ENCODE measurements at regions of chr6 and their contacts with region 1.

Region 1: DNA sequence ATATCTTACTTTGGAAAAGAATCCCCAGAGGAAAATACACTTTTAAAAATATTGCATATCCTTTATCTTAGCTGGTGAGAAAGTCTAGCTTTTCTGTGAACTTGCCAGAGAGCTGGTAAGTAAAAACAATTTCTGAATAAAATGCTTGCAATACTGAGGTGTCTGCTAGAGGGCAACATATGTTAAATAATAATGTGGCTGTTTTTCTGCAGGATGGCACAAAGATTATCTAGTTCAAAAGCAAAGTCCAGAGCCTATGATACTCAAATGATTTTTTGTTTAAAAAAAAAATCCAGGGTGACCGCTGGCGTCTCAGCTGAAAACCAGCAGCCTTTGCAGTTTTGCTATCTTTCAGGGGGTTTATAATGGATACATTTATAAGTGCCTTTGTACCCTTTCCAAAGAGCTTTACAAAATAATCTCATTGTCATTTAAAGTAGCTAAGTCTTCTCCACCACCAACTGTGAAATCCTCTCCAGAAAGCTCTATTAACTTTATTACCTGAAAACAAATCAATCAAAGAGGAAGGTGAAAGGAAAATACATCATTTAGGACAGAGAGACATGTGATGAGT is 194.9 kb downstream of the PHACTR1 start:
- DNase-seq: peak; percentile 63
- H3K4me3 ChIP-seq: no peak overlapping the region
- H3K27ac ChIP-seq: no peak overlapping the region
- H3K4me1 ChIP-seq: no peaks in the 10 kb centered on the region
- H3K27me3 ChIP-seq: peaks cover 2 to 10% of the 10 kb centered on the region in 2 experiments
- CTCF ChIP-seq: peak; percentile 26 to 27
- POLR2A ChIP-seq: no peak

Region 2: GRCh38 chr6:12865671-12866181 is 45.7 kb before region 1 on chr6:
- CTCF ChIA-PET with region 1: no interaction called
- POLR2A ChIA-PET with region 1: no interaction called
- dilution Hi-C with region 1: no loop called
- intact Hi-C with region 1: no loop called
- DNase-seq: no peak
- H3K4me3 ChIP-seq: no peak overlapping the region
- H3K27ac ChIP-seq: no peak overlapping the region
- H3K4me1 ChIP-seq: no peaks in the 10 kb centered on the region
- H3K27me3 ChIP-seq: peaks cover 3 to 6% of the 10 kb centered on the region in 2 experiments
- CTCF ChIP-seq: no peak
- POLR2A ChIP-seq: no peak

Region 3: DNA sequence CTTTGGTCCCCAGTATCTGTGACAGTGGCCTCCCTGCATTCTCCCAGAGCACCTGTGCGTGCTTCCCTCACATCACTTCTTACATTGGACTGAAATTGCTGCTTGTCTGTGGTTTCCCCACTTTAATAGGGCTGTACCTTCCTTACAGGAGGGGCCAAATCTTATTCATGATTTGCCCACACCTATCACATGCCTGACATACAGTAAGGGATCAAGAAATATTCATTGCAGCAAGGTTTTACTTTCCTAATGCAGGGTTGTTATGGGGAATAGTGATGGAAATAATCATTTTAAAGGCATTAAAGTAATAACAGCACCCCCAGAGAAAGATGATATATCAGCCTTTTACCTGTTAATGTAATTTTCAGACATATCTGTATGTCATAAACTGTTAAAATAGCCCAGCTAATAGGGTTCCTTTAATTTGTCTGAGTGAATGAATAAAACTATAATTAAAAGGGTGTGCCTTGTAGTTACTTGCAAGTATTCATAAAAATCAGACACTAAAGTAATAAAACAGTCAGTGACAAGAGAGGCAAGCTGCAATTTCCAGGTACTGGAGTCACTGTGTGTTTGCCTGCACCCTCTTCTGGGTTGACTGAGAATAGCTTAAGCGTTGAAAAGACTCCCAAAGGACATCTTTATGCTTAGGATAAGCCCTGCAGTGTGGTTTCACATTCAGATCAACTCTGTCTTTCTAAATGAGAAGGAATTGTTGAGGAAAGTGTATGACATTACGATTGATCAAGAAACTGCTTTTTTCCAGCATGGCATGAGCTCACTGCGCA is 12.2 kb before region 1 on chr6:
- CTCF ChIA-PET with region 1: interaction called, 17 read pairs
- POLR2A ChIA-PET with region 1: no interaction called
- dilution Hi-C with region 1: no loop called
- intact Hi-C with region 1: no loop called
- DNase-seq: no peak
- H3K4me3 ChIP-seq: no peak overlapping the region
- H3K27ac ChIP-seq: no peak overlapping the region
- H3K4me1 ChIP-seq: no peaks in the 10 kb centered on the region
- H3K27me3 ChIP-seq: peaks cover 17 to 23% of the 10 kb centered on the region in 2 experiments
- CTCF ChIP-seq: no peak
- POLR2A ChIP-seq: no peak

Region 4: GRCh38 chr6:13049663-13050254 is 138.3 kb after region 1 on chr6:
- CTCF ChIA-PET with region 1: interaction called, 13 read pairs
- POLR2A ChIA-PET with region 1: no interaction called
- dilution Hi-C with region 1: no loop called
- intact Hi-C with region 1: no loop called
- DNase-seq: peak; percentile 11
- H3K4me3 ChIP-seq: no peak overlapping the region
- H3K27ac ChIP-seq: no peak overlapping the region
- H3K4me1 ChIP-seq: no peaks in the 10 kb centered on the region
- H3K27me3 ChIP-seq: no peaks in the 10 kb centered on the region
- CTCF ChIP-seq: no peak
- POLR2A ChIP-seq: no peak

Region 5: GRCh38 chr6:13194852-13195251 is 283.4 kb after region 1 on chr6:
- CTCF ChIA-PET with region 1: interaction called, 51 read pairs
- POLR2A ChIA-PET with region 1: no interaction called
- dilution Hi-C with region 1: no loop called
- intact Hi-C with region 1: loop called (anchors 1 kb)
- DNase-seq: peak; percentile 69
- H3K4me3 ChIP-seq: no peak overlapping the region
- H3K27ac ChIP-seq: no peak overlapping the region
- H3K4me1 ChIP-seq: no peaks in the 10 kb centered on the region
- H3K27me3 ChIP-seq: no peaks in the 10 kb centered on the region
- CTCF ChIP-seq: peak; percentile 51 to 72
- POLR2A ChIP-seq: no peak

Region 6: GRCh38 chr6:13302751-13303667 is 391.5 kb after region 1 on chr6:
- CTCF ChIA-PET with region 1: interaction called, 23 read pairs
- POLR2A ChIA-PET with region 1: no interaction called
- dilution Hi-C with region 1: no loop called
- intact Hi-C with region 1: loop called (anchors 10 kb)
- DNase-seq: peak; percentile 93
- H3K4me3 ChIP-seq: peak overlapping the region in 1 of 3 experiments; percentile 15
- H3K27ac ChIP-seq: peak overlapping the region; percentile 86
- H3K4me1 ChIP-seq: peaks cover 36% of the 10 kb centered on the region
- H3K27me3 ChIP-seq: no peaks in the 10 kb centered on the region
- CTCF ChIP-seq: no peak
- POLR2A ChIP-seq: no peak

Region 7: DNA sequence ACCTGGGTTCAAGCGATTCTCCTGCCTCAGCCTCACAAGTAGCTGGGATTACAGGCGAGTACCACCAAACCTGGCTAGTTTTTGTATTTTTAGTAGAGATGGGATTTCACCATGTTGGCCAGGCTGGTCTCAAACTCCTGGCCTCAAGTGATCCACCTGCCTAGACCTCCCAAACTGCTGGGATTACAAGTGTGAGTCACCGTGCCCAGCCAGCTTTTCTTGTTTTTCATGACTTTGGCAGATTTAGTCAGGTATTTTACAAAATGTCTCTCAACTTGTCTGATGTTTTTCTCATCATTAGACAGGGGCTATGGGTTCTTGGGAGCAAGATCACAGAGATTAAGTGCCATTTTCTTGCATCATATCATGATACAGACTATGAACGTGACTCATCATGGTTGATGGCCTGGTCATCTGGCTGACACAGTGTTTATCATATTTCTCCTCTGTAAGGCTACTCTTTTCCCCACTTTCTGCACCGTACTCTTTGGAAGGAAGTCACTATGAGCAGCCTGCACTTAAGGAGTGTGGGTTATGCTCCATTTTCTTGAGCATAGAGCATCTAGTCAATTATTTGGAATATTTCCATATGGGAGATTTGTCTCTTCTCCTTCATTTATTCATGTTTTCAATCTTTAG is 1081.1 kb after region 1 on chr6:
- CTCF ChIA-PET with region 1: no interaction called
- POLR2A ChIA-PET with region 1: no interaction called
- dilution Hi-C with region 1: no loop called
- intact Hi-C with region 1: no loop called
- DNase-seq: no peak
- H3K4me3 ChIP-seq: no peak overlapping the region
- H3K27ac ChIP-seq: no peak overlapping the region
- H3K4me1 ChIP-seq: no peaks in the 10 kb centered on the region
- H3K27me3 ChIP-seq: no peaks in the 10 kb centered on the region
- CTCF ChIP-seq: no peak
- POLR2A ChIP-seq: no peak

Measured in endothelial cell of umbilical vein (primary cell).